ENCODE measurements at regions of chr1 and their contacts with region 1.

Region 1: GRCh38 chr1:204257954-204258752 is 44.4 kb upstream of the GOLT1A start:
- DNase-seq: peak; percentile 92

Region 2: DNA sequence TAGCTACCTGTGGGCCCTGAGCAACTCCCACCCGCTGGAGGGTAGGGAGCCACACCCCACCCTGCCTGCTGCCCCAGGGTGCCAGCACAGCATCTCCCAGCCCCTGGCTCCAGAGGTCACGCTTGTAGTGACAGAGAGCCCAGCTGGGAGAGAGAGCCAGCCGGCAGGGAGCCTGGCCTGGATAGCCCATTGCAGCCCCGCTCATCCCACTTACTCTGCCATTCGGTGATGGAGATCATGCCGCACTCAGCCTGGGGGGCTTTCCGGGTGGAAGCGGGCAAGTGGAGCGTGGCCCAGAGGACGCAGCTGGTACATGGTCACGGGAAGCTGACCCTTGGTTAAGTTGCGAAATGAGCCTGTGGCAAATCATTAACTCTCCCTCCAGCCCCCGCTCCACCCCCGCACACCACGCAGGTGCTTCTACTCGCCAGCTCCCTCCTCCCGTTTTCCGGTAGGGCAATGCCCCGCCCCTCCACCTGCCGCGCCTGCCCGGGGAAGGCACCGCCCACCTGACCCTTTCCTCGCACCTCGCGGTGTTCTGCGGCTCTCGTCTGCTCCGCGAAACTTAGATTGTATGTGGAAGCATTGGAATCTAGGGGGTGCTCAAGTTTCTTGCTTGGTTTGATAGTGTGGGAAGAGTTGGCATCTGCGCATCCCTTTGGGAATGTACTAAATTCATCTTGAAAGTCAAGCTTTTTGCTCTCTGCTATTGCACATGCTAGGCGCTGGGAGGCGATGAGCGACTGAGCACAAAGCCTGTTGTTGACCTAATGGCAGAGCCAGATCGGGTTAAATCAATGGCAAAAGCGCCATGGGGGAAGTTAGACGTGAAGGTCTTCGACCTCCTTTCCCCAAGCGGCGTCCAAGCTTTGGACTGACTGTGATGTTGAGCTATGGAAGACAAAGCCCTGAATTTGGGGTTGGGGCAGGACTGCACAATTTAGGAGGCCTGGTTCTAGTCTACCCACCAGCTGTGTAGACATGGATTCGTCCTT is 44.2 kb before region 1 on chr1 and contains the start of gene GOLT1A:
- CTCF ChIA-PET with region 1: no interaction called
- POLR2A ChIA-PET with region 1: no interaction called
- DNase-seq: no peak

Region 3: DNA sequence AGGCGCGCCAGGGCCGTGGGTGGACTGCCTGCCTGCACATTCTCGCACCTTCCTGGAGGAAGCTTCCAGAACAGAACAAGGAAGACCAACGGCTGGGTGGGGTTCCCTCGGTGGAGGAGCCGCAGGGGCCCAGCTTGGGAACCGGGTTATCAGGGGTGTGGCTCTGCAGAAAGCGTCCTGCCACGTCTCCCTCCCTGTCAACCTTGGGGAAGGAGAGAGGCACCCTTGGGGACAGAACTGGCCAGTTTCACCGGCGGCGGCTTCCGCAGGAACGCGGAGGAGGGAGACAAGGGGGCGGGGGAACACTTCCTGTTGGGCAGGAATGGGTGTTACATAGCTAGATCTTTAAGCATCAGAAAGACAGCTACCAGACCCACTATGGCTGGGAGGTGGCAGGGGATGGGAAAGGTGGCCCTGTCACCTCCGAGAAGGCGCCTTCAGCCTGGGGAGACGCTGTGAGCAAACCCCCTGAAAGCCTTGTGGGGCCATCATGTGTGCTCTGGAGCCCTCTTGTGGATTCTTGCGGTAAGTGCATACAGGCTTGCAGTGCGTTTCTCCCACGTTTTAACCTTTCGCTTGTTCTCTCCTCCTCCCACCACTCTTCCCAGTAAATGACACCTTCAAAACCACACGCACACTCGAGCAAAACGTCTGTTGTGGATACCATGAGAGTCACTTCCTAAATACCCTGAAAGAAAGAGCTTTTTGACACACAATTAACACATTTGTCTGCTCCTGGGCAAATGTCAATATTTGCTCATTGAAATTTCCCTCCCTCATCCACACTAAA is 105.4 kb after region 1 on chr1:
- CTCF ChIA-PET with region 1: interaction called, 23 read pairs
- POLR2A ChIA-PET with region 1: no interaction called
- DNase-seq: peak; percentile 85